GM10248 (cell line): ENCODE measurements at regions of chr1 and their contacts with region 1.

Region 1: DNA sequence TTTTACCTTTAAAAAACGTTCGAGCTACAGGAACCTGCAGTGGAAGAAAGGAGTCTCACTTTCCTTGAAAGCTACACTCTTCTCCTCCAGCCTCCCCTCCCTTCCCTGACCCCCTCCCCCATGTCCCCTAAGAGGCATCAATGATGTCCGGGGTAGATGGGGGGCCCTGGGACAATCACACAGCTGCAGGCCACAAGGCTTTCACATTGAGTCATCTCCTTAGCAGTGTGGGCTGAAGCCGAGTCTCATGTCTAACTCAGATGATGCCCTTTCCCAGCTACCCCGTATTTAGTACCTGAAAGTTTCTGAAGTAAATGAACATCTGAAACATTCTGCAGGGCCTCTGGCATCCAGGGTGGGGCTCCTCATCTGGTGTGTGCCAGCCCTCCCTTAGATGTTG is 6.3 kb upstream of the GPR25 start:
- DNase-seq: peak; percentile 82
- CTCF ChIP-seq: no peak

Region 2: DNA sequence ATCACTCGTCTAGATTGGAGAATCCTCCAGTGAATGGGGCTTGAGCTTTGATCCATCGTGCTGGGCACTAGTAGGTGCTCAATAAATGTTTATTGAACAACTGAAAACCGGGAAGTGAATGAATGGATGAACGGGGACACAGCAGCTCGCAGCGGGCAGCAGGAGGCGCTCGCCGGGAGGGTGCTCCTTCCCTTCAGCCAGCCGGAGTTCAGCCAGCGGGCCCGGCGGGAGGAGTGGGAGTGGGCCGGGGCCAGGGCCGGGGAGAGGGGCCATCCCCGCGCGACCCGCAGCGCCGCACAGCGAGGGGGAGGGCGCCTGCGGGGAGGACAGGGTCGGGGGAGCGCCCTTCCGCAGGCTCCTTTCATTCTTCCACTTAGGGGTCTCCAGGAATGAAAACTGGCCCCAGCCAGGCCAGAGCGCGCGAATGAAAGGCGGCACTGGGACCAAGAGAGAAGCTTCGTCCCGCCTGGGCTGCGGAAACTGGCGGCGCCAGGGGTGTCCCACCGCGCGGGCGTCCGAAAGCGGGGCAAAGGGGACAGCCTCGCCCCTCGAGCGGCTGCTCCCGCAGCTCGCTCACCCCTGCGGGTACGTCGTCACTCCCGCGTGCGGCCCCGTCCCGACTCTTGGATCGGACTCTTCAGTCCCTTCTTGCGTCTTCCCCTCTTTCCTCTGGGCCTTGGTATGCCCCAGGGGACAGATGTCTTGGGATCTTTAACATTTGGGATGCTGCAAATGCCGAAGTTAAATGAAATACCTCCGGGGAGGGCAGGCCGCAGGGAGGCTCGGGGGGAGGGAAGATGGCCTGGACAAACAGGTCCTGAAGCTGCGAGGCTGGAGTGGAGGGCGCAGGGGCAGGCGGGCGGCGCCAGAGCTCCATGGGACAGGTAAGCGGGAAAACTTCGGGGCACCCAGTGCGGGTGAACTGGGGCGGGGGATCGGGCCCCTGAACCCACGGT is 24.6 kb after region 1 on chr1:
- CTCF ChIA-PET with region 1: interaction called, 15 read pairs
- POLR2A ChIA-PET with region 1: interaction called, 3 read pairs
- DNase-seq: no peak
- CTCF ChIP-seq: peak; percentile 72